Naive thymus-derived CD4-positive, alpha-beta T cell (primary cell): ENCODE measurements at regions of chr1 and their contacts with region 1.

Region 1: GRCh38 chr1:42456010-42456758 is at the starts of genes PPCS and ZMYND12:
- DNase-seq: peak; percentile 84 to 94 (median 92)
- ATAC-seq: peak; percentile 95
- H3K4me3 ChIP-seq: peak within 1 kb of the TSS; percentile 100
- H3K4me3 Mint-ChIP-seq: peak within 1 kb of the TSS; percentile 85 to 99 (median 96)
- H3K27ac ChIP-seq: peak within 1 kb of the TSS; percentile 91
- H3K27ac Mint-ChIP-seq: peak within 1 kb of the TSS; percentile 95 to 100 (median 98)
- H3K4me1 ChIP-seq: peaks cover 17 to 23% of the 10 kb centered on the region in 2 donors
- H3K4me1 Mint-ChIP-seq: peaks cover 23 to 53% (median 40%) of the 10 kb centered on the region in 7 donors
- H3K27me3 ChIP-seq: no peaks in the 10 kb centered on the region
- H3K27me3 Mint-ChIP-seq: peaks cover 0 to under 1% (median 0%) of the 10 kb centered on the region in 5 donors
- total RNA-seq, gene PPCS: 45.4 to 78.4 (median 50.0) TPM
- total RNA-seq, gene ZMYND12: 0.44 to 1.2 (median 1.1) TPM

Region 2: GRCh38 chr1:40979233-40980067 is 1476.7 kb before region 1 on chr1 and contains the start of gene CTPS1:
- CTCF ChIA-PET with region 1: no interaction called
- POLR2A ChIA-PET with region 1: no interaction called
- intact Hi-C with region 1: loop called in 1 of 2 experiments (anchors 2 kb)
- DNase-seq: peak; percentile 88 to 97 (median 95)
- ATAC-seq: peak; percentile 92
- H3K4me3 ChIP-seq: peak within 1 kb of the TSS; percentile 62
- H3K4me3 Mint-ChIP-seq: peak within 1 kb of the TSS; percentile 78 to 98 (median 92)
- H3K27ac ChIP-seq: peak within 1 kb of the TSS; percentile 97
- H3K27ac Mint-ChIP-seq: peak within 1 kb of the TSS; percentile 84 to 97 (median 94)
- H3K4me1 ChIP-seq: peaks cover 10 to 11% of the 10 kb centered on the region in 2 donors
- H3K4me1 Mint-ChIP-seq: peaks cover 17 to 42% (median 29%) of the 10 kb centered on the region in 7 donors
- H3K27me3 ChIP-seq: no peaks in the 10 kb centered on the region
- H3K27me3 Mint-ChIP-seq: no peaks in the 10 kb centered on the region
- total RNA-seq, gene CTPS1: 16.4 to 57.6 (median 40.6) TPM

Region 3: DNA sequence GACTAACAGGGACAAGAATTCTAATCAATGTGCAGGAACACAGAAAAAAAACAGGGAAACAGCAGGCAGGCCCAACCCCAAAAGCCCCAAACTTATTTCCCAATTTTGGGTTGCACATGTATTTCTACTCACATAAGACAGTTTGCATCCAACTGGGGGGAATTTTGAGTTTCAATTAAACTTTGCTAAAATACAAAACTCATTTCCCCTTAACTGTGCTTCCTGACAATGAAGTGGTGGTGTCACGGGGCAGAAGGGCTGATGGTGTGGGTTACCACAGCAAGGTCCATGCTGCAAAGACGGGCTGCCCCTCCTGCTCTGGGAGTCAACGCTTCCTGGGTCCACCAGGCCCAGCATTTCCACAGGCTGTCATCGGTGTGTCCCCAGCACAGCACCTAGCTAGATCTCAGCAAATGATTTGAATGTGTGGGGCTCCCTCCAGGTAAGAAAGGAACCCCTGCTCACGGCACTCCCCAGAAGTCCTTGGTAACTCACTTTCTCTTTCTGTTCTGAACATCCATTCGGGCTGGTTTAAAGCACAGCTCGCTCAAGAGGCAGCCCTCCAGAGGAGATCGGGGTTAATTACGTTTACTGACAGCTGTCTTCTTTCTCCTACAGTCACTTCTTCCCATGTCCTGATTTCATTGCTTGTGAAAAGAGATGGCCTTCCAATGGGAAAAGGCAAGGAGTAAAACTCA is 564.8 kb before region 1 on chr1:
- CTCF ChIA-PET with region 1: no interaction called
- POLR2A ChIA-PET with region 1: no interaction called
- intact Hi-C with region 1: loop called (anchors 10 kb)
- DNase-seq: peak; percentile 37 to 80 (median 75)
- ATAC-seq: peak; percentile 94
- H3K4me3 ChIP-seq: peak overlapping the region; percentile 60
- H3K4me3 Mint-ChIP-seq: peak overlapping the region; percentile 77 to 93 (median 84)
- H3K27ac ChIP-seq: peak overlapping the region; percentile 68
- H3K27ac Mint-ChIP-seq: peak overlapping the region; percentile 84 to 94 (median 92)
- H3K4me1 ChIP-seq: peaks cover 17 to 45% of the 10 kb centered on the region in 2 donors
- H3K4me1 Mint-ChIP-seq: peaks cover 23 to 64% (median 36%) of the 10 kb centered on the region in 7 donors
- H3K27me3 ChIP-seq: no peaks in the 10 kb centered on the region
- H3K27me3 Mint-ChIP-seq: peaks cover 0 to 2% (median 0%) of the 10 kb centered on the region in 5 donors

Region 4: DNA sequence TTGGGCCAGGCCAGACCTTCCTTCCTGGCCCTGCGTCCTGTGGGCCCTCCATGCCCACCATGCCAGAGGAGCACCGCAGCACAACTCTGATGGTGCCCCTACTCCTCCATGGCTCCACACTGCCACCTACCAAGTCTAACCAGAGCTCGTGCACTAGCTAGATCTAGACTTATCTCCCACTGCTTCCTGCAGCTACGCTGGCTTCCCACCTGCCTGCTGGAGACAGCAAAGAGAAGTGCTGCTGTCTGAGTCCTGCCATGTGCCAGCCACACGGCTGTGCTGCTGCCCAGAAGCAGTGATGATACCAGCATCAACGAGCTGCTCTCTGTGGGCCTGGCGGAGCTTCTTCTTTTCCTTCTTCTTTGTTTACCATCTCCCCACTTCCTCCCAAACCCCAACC is 298.5 kb before region 1 on chr1:
- CTCF ChIA-PET with region 1: no interaction called
- POLR2A ChIA-PET with region 1: no interaction called
- intact Hi-C with region 1: no loop called
- DNase-seq: peak in 1 of 9 donors; percentile 12
- ATAC-seq: peak; percentile 40
- H3K4me3 ChIP-seq: no peak overlapping the region
- H3K4me3 Mint-ChIP-seq: peak overlapping the region in 3 of 10 donors; percentile 5 to 51 (median 25)
- H3K27ac ChIP-seq: no peak overlapping the region
- H3K27ac Mint-ChIP-seq: peak overlapping the region in 2 of 9 donors; percentile 14 to 60
- H3K4me1 ChIP-seq: no peaks in the 10 kb centered on the region
- H3K4me1 Mint-ChIP-seq: peaks cover 6 to 9% (median 7%) of the 10 kb centered on the region in 7 donors
- H3K27me3 ChIP-seq: no peaks in the 10 kb centered on the region
- H3K27me3 Mint-ChIP-seq: peaks cover 0 to 14% (median 11%) of the 10 kb centered on the region in 5 donors

Region 5: GRCh38 chr1:42173155-42173933 is 282.8 kb before region 1 on chr1:
- CTCF ChIA-PET with region 1: no interaction called
- POLR2A ChIA-PET with region 1: interaction called, 5 read pairs
- intact Hi-C with region 1: loop called (anchors 1 to 10 kb)
- DNase-seq: peak; percentile 28 to 76 (median 57)
- ATAC-seq: peak; percentile 85
- H3K4me3 ChIP-seq: no peak overlapping the region
- H3K4me3 Mint-ChIP-seq: no peak overlapping the region
- H3K27ac ChIP-seq: no peak overlapping the region
- H3K27ac Mint-ChIP-seq: peak overlapping the region in 2 of 9 donors; percentile 17 to 71
- H3K4me1 ChIP-seq: no peaks in the 10 kb centered on the region
- H3K4me1 Mint-ChIP-seq: peaks cover 0 to 3% (median 0%) of the 10 kb centered on the region in 7 donors
- H3K27me3 ChIP-seq: no peaks in the 10 kb centered on the region
- H3K27me3 Mint-ChIP-seq: no peaks in the 10 kb centered on the region

Region 6: DNA sequence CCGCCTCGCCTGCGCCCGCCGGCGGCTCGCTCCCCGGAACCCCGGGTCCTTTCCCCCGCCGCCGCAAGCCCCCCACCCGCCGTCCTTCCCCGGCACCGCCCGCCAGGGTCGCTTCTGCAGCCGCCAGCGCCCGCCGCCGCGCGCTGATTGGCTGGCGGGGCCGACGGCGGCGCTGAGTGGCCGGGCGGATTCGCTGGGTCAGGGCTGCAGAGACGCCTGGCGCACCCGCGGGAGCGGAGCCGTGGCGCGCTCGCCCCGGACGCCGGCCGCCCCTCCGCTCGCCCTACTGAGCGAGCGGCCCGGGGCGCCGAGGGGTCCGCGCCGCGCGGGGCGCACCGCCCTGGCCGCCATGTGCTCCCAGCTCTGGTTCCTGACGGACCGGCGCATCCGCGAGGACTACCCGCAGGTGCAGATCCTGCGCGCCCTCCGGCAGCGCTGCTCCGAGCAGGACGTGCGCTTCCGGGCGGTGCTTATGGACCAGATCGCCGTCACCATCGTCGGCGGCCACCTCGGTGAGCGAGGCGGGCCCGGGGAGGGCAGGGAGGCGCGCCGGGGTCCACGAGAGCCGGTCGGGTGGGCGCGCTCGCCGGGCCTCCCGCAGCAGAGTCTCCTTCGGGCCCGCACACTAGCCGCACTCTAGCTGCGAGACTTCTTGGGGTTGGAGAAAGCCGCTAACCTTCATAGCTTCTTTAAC is 75.5 kb before region 1 on chr1 and contains the start of gene RIMKLA:
- CTCF ChIA-PET with region 1: no interaction called
- POLR2A ChIA-PET with region 1: no interaction called
- intact Hi-C with region 1: loop called in 1 of 2 experiments (anchors 5 kb)
- DNase-seq: peak in 8 of 9 donors; percentile 8 to 70 (median 16)
- ATAC-seq: peak; percentile 81
- H3K4me3 ChIP-seq: peak within 1 kb of the TSS; percentile 33
- H3K4me3 Mint-ChIP-seq: peak within 1 kb of the TSS; percentile 77 to 85 (median 82)
- H3K27ac ChIP-seq: no peak within 1 kb of the TSS
- H3K27ac Mint-ChIP-seq: peak within 1 kb of the TSS in 1 of 9 donors; percentile 22
- H3K4me1 ChIP-seq: no peaks in the 10 kb centered on the region
- H3K4me1 Mint-ChIP-seq: peaks cover 0 to 15% (median 7%) of the 10 kb centered on the region in 7 donors
- H3K27me3 ChIP-seq: peaks cover 0 to 14% of the 10 kb centered on the region in 2 donors
- H3K27me3 Mint-ChIP-seq: peaks cover 23 to 50% (median 43%) of the 10 kb centered on the region in 5 donors
- total RNA-seq, gene RIMKLA: 0.03 to 3.1 (median 0.17) TPM in 4 of 5 experiments, not detected in the other

Region 7: DNA sequence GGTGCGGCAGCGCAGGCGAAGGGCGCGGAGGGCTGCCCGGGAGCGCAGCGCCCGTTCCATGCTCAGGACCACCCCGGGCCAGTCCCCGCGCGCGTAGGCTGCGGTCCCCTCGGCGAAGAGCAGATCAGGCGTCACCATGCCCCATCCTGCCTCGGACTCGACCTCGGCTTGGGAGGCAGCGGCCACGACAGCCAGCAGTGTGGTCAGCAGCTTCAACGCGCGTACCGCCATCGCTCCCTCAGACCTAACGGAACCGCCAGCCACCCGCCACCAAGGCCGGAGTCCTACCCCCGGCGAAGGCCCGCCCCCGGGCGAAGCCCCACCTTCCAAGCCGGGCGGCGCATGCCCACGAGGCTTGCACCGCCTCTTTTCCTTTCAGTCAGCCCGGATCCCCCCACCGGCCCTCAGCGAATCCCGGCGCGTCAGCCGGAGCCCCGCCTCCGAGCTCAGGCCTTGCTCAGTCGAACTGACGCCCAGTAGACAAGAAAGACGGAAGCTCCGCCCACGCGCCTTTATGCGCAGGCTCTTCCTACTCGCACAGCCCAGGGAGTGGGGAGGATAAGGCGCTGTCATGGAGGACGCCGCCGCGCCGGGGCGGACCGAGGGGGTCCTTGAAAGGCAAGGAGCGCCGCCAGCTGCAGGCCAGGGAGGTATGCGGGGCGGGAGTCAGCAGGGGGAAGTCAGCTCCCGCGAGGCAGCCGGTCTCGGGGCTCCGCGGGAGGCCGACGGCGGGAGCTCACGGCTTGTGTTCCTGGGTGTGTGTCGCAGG is 310.7 kb after region 1 on chr1 and contains the starts of genes C1orf50 and P3H1:
- CTCF ChIA-PET with region 1: no interaction called
- POLR2A ChIA-PET with region 1: interaction called, 7 read pairs
- intact Hi-C with region 1: loop called (anchors 1 kb)
- DNase-seq: peak; percentile 98 to 100 (median 100)
- ATAC-seq: peak; percentile 96
- H3K4me3 ChIP-seq: peak within 1 kb of the TSS; percentile 91
- H3K4me3 Mint-ChIP-seq: peak within 1 kb of the TSS in 1 of 10 donors; percentile 92
- H3K27ac ChIP-seq: peak within 1 kb of the TSS; percentile 84
- H3K27ac Mint-ChIP-seq: peak within 1 kb of the TSS in 8 of 9 donors; percentile 70 to 96 (median 92)
- H3K4me1 ChIP-seq: peaks cover 25 to 35% of the 10 kb centered on the region in 2 donors
- H3K4me1 Mint-ChIP-seq: peaks cover 20 to 50% (median 32%) of the 10 kb centered on the region in 7 donors
- H3K27me3 ChIP-seq: no peaks in the 10 kb centered on the region
- H3K27me3 Mint-ChIP-seq: no peaks in the 10 kb centered on the region
- total RNA-seq, gene C1orf50: 7.0 to 20.8 (median 18.1) TPM
- total RNA-seq, gene P3H1: 32.5 to 61.8 (median 47.3) TPM